SK-MEL-5 (cell line): ENCODE measurements at regions of chr12 and their contacts with region 1.

Region 1: DNA sequence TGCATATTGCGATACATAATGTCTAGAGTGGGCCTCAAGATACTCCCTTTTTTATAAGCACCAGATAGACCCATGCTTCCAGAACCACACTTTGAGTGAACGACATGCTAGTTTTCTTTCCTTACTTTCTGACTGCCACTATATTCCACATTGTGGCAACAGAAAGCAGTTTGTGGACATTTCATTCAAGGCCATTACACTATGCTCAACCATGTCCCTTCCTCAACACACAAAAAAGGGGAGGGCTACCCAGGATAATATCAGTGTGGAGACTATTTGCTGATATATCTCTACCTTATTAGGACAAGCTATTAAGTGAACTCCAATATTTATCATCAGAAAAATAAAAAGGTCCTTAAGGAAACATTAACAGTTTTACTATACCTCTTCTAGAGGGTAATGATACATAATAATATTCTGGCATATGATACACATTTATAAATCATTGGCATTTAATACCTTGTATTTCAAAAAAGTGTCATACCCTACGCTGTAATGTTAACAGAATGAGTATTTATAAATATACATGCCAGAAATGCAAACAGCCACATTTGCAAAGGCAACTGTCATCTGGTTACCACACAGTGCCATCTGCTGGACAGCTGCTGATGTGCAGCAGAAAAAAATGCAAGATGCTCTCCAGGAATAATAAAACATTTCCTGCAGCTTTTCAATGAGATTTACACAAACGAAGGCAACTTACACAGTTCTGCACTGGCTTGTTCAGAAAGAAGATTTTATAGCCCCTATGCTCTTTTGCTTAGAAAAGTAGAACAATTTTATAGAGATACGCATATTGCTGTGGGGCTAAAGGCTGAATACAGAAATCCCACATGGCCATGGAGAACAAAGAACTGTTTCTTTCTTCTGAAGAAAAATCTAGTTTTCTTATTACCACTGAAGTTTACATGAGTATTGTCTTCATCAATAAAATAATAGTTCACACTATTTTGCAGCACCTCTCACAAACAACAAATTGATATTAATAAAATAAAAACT is 182.2 kb upstream of the GRIP1 start:
- DNase-seq: peak; percentile 70

Region 2: DNA sequence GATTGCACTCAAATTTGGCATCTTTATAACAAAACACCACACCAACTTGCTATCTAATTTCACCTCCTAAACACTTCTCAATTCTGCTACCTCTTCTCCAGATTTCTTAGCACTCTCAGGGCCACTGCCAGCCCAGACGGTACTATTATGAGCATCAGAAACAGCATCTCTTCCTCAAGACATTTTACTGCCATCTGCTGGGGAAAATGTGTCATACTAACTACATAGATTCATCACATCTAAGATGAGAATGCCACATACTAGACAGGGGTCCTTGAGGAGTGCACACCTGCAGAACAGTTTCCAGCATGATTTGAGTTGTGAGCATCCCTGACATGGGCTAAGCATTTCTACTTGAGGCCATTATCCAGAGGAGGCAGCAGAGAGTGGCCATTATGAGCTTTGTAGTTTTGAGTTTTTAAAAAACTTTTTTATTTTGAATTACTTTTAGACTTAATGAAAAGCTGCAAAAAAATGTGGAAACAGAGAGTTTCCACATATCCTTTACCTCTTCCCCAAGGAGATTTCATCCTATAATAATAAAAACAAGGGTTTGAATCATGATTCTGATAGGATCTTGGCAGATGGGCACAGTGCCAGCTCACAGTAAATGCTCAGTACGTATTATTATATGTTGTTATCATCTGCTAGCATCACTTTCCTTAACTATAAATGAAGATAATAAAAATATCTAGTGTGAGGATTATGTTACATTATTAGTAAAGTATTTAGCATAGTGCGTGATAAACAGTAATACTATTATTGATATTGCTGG is 167.0 kb before region 1 on chr12:
- in situ Hi-C with region 1: loop called (anchors 25 kb)
- DNase-seq: peak; percentile 84